Panc1 (cell line): ENCODE measurements at regions of chr3 and their contacts with region 1.

Region 1: DNA sequence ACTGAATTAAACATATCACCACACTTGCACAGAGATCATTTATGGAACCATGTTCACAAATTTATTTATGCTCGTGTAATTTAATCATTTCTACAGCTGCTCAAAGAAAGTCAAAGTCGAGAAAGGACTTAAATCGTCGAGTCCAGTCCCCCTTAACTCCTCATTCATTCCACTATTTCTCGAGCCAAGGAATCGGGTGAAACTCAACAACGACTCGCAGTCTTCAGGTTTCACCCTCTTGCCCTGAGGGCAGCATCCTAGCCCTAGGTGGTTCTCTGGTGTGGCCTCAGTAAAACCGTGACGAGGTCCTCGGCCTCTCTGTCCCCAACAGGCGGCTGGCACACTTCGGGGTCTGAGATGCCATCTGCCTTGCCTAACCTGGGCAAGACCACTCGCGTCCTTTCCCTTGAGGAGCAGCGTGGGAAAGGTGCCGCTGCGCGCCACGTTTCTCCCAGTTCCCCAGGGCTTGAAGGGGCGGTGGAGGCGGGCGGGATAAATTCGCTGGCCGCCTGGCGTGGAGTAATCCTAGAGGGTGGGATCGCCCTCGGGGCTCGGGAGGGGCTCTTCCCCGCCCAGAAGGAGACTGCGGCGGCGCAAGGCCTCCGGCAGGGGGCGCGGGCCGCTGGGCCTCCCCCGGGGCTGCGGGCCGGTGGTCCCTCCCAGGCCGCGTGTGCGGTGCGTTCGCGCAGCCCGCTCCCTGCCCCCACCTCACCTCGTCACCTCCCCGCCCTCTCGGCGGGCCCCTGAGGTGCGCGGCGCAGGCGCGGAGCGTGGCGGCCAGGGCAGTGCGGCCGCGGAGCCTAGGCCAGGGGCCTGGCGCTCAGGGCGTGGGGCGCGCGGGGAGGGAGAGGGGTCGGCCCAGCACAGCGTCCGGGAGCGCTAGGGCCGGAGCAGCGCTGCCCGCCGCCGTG is at the start of gene ZNF639:
- DNase-seq: peak; percentile 33
- ATAC-seq: peak; percentile 95
- H3K4me3 ChIP-seq: peak within 1 kb of the TSS; percentile 87 to 89
- H3K27ac ChIP-seq: peak within 1 kb of the TSS; percentile 95
- H3K4me1 ChIP-seq: peaks cover 20% of the 10 kb centered on the region
- H3K27me3 ChIP-seq: no peaks in the 10 kb centered on the region
- CTCF ChIP-seq: peak; percentile 96
- total RNA-seq, gene ZNF639: 56.1 TPM

Region 2: GRCh38 chr3:178392511-178392926 is 930.0 kb before region 1 on chr3:
- CTCF ChIA-PET with region 1: no interaction called
- POLR2A ChIA-PET with region 1: no interaction called
- in situ Hi-C with region 1: no loop called
- intact Hi-C with region 1: no loop called
- DNase-seq: no peak
- ATAC-seq: no peak
- H3K4me3 ChIP-seq: no peak overlapping the region
- H3K27ac ChIP-seq: no peak overlapping the region; the same call in 1 of the 2 replicates
- H3K4me1 ChIP-seq: no peaks in the 10 kb centered on the region
- H3K27me3 ChIP-seq: no peaks in the 10 kb centered on the region
- CTCF ChIP-seq: no peak

Region 3: DNA sequence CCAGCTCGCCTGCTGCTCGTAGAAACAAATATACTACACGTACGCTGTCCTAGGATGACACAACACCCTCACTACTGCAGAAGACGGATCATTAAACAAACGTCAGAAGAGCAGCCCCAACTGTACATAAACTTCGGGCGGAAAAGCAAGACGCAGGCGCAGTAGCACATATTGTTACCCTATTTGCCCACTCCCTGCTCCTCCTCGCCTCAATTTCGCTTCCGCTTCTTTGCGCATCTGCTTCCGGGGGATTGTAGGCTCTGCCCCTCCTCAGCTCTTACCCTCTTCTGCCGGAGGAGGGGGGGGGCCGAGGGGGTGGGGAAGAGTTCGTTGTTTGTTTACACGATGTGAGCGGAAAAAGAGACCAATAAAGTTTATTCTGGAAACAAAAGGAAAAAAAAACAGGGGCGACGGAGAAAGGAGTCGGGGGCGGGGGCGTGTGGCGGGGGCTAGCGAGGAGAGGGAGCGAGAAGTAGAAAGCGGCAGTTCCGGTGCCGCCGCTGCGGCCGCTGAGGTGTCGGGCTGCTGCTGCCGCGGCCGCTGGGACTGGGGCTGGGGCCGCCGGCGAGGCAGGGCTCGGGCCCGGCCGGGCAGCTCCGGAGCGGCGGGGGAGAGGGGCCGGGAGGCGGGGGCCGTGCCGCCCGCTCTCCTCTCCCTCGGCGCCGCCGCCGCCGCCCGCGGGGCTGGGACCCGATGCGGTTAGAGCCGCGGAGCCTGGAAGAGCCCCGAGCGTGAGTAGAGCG is 174.5 kb before region 1 on chr3 and contains the start of gene PIK3CA:
- CTCF ChIA-PET with region 1: interaction called, 3 read pairs
- POLR2A ChIA-PET with region 1: no interaction called
- in situ Hi-C with region 1: no loop called
- intact Hi-C with region 1: loop called (anchors 2 kb)
- DNase-seq: peak; percentile 95
- ATAC-seq: peak; percentile 91
- H3K4me3 ChIP-seq: peak within 1 kb of the TSS; percentile 89 to 97
- H3K27ac ChIP-seq: peak within 1 kb of the TSS; percentile 91
- H3K4me1 ChIP-seq: peaks cover 24% of the 10 kb centered on the region
- H3K27me3 ChIP-seq: no peaks in the 10 kb centered on the region
- CTCF ChIP-seq: no peak
- total RNA-seq, gene PIK3CA: 27.6 TPM